Activated CD8-positive, alpha-beta memory T cell treated with anti-CD3 and anti-CD28 coated beads, Interleukin-2, amount 10 ng/mL, durations not matched to agents 7 days and 5 days (primary cell): ENCODE measurements at regions of chr3 and their contacts with region 1.

Region 1: DNA sequence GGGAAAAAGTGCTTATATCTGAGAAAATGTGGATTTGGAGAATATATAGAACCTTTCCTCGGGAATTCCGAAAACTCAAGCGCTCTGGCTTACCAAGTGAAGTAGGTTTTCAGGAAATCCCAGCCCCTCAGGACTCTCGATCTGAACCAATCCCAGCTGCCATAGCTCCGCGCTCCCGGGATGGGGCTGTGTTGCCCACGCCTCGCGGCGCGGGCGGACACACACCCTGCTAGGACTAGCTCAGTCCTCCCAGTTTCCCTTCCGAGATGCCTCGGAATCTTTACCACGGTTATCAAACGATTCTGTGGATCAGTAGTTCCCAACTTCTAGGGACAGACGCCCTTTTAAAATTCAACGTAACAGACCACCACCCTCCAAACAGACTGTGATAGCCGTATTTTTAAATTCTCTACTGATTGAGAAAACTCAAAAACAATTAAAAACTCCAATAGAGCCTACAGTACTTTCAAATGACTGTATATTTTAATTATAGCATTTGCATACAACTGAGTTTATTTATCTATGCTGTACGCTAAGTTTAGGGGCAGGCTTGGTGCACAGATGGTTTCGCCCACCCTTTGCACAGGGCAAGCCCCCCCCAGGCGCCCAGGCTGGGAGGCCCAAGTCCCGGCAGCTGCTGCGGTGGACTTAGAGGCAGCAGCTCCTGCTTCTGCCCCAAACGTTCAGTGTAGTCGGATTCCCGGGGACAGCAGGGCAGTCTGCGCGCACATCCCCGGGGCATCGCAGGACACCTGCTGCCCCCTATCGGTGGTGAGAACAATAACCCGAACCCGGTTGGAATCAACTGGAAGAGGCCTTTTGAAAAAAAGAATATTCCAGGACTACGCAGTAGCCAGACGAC is 52.3 kb downstream of the CCDC54 start:
- DNase-seq: peak; percentile 73
- ATAC-seq: peak; percentile 61
- H3K4me3 Mint-ChIP-seq: peak overlapping the region; percentile 73
- H3K27ac Mint-ChIP-seq: peak overlapping the region; percentile 28
- H3K4me1 Mint-ChIP-seq: peaks cover 18% of the 10 kb centered on the region
- H3K27me3 Mint-ChIP-seq: peaks cover 35% of the 10 kb centered on the region

Region 2: GRCh38 chr3:107271787-107272387 is 157.7 kb before region 1 on chr3:
- CTCF ChIA-PET with region 1: interaction called, 24 read pairs
- DNase-seq: no peak
- ATAC-seq: peak; percentile 61
- H3K4me3 Mint-ChIP-seq: no peak overlapping the region
- H3K27ac Mint-ChIP-seq: no peak overlapping the region
- H3K4me1 Mint-ChIP-seq: no peaks in the 10 kb centered on the region
- H3K27me3 Mint-ChIP-seq: peaks cover 10% of the 10 kb centered on the region

Region 3: DNA sequence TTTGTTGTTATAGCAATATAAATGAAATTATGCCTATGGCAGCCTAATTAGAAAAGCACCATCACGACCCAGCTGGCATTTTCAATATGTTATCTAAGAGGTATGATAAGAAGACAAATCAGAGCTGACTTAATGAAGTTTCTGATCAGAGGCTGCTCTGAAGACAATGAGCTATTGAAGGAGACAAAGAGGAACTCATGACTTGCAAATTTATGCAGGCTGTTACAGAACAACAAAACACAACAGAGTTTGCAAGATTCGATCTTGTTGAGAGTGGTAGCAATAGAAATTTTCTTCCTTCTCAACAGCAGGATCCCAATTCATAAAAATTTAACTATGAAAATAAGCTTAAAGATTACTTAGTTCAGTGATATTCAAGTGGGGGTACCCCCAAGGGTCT is 44.6 kb before region 1 on chr3:
- CTCF ChIA-PET with region 1: no interaction called
- DNase-seq: no peak
- ATAC-seq: no peak
- H3K4me3 Mint-ChIP-seq: no peak overlapping the region
- H3K27ac Mint-ChIP-seq: no peak overlapping the region
- H3K4me1 Mint-ChIP-seq: no peaks in the 10 kb centered on the region
- H3K27me3 Mint-ChIP-seq: peaks cover 19% of the 10 kb centered on the region

Region 4: GRCh38 chr3:107409365-107409764 is 20.2 kb before region 1 on chr3:
- CTCF ChIA-PET with region 1: interaction called, 11 read pairs
- DNase-seq: no peak
- ATAC-seq: no peak
- H3K4me3 Mint-ChIP-seq: no peak overlapping the region
- H3K27ac Mint-ChIP-seq: no peak overlapping the region
- H3K4me1 Mint-ChIP-seq: peaks cover 11% of the 10 kb centered on the region
- H3K27me3 Mint-ChIP-seq: peaks cover 8% of the 10 kb centered on the region

Region 5: DNA sequence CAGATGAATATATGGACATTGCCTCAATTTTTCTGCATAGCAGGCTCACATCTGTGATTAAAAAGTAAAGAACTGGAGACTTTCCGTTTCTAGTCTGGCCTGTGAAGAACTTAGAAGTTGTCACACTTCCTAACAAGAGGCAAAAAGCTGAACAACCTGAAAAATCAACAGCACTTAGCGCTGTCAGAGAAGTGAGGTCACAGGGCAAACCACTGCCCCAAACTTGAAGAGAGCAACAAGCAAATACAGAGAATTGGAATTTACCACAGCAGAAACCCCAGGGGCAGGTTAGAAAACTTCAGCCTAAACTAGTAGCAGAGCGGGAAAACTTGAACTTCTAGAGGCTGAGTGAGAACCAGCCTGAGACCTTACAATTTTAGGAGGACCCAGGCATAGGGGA is 13.4 kb before region 1 on chr3:
- CTCF ChIA-PET with region 1: interaction called, 38 read pairs
- DNase-seq: no peak
- ATAC-seq: peak; percentile 43
- H3K4me3 Mint-ChIP-seq: no peak overlapping the region
- H3K27ac Mint-ChIP-seq: no peak overlapping the region
- H3K4me1 Mint-ChIP-seq: peaks cover 21% of the 10 kb centered on the region
- H3K27me3 Mint-ChIP-seq: peaks cover 18% of the 10 kb centered on the region